ENCODE measurements at regions of chr1 and their contacts with region 1.

Region 1: GRCh38 chr1:53470155-53470554 is 11.0 kb downstream of the DMRTB1 start:
- DNase-seq: peak; percentile 58
- ATAC-seq: peak; percentile 95
- H3K4me3 ChIP-seq: no peak overlapping the region
- H3K27ac ChIP-seq: no peak overlapping the region
- H3K4me1 ChIP-seq: no peaks in the 10 kb centered on the region
- H3K27me3 ChIP-seq: peaks cover 8% of the 10 kb centered on the region
- CTCF ChIP-seq: peak; percentile 68
- POLR2A ChIP-seq: no peak
- RAD21 ChIP-seq: peak; percentile 37

Region 2: DNA sequence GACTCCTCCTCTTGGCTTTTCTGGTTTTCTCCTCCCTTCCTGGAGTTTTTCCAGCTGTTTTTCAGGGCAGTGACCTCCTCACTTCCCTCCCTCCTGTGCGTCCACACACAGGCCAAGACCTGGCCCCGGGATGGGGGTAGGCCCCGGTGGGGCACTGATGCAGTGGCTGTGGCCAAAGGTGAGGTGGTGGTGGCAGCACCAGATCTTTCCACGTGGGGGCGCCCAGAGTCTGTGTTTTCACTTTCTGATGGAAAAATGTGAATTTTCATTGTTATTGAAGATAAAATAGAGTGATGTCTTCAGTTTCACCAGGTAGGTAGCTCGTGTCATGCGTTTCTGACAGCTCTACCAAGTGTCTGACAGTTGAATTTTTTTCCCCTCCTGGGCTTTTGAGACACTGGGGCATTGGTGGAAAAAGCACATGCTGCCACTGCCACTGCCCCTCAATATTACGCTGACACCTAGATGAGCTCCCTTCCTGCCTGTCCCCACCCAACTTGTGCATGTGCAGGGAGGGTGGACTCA is 191.9 kb before region 1 on chr1:
- CTCF ChIA-PET with region 1: no interaction called
- POLR2A ChIA-PET with region 1: no interaction called
- dilution Hi-C with region 1: no loop called
- in situ Hi-C with region 1: loop called (anchors 5 kb)
- intact Hi-C with region 1: loop called (anchors 2 kb)
- DNase-seq: peak; percentile 7
- ATAC-seq: peak; percentile 92
- H3K4me3 ChIP-seq: no peak overlapping the region
- H3K27ac ChIP-seq: no peak overlapping the region
- H3K4me1 ChIP-seq: no peaks in the 10 kb centered on the region
- H3K27me3 ChIP-seq: no peaks in the 10 kb centered on the region
- CTCF ChIP-seq: peak; percentile 94
- POLR2A ChIP-seq: no peak
- RAD21 ChIP-seq: peak; percentile 93

Region 3: DNA sequence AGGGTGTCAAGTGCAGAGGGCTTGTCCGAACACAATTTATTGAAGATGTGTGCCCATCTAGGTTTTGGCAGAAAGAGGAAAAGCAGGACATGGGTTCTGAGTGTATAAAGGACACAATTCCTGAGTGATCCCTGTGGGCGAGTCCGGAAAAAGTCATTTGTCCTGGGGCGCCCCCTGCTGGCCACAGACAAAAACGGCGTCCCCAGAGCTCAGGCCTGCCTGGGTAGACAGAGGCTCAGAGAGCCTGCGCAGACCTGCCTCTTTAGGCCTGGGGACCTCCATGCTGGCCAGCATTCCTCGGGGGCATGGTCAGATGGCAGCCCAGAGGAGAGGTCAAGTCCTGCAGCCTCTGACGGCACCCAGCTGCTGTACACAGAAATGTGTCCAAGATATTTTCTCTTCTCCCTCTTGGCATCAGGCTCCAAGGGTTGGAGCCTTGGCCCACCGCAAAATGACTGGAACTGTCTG is 76.8 kb before region 1 on chr1:
- CTCF ChIA-PET with region 1: no interaction called
- POLR2A ChIA-PET with region 1: no interaction called
- dilution Hi-C with region 1: no loop called
- in situ Hi-C with region 1: no loop called
- intact Hi-C with region 1: loop called (anchors 5 kb)
- DNase-seq: peak; percentile 59
- ATAC-seq: peak; percentile 97
- H3K4me3 ChIP-seq: no peak overlapping the region
- H3K27ac ChIP-seq: no peak overlapping the region
- H3K4me1 ChIP-seq: no peaks in the 10 kb centered on the region
- H3K27me3 ChIP-seq: peaks cover 28% of the 10 kb centered on the region
- CTCF ChIP-seq: peak; percentile 92
- POLR2A ChIP-seq: peak; percentile 33; the same call in 1 of the 2 replicates
- RAD21 ChIP-seq: peak; percentile 93

Region 4: GRCh38 chr1:53562291-53562980 is 92.3 kb after region 1 on chr1:
- CTCF ChIA-PET with region 1: no interaction called
- POLR2A ChIA-PET with region 1: no interaction called
- dilution Hi-C with region 1: no loop called
- in situ Hi-C with region 1: no loop called
- intact Hi-C with region 1: no loop called
- DNase-seq: peak; percentile 30
- ATAC-seq: no peak
- H3K4me3 ChIP-seq: no peak overlapping the region
- H3K27ac ChIP-seq: no peak overlapping the region
- H3K4me1 ChIP-seq: peaks cover 6% of the 10 kb centered on the region; the same call in 1 of the 2 replicates
- H3K27me3 ChIP-seq: no peaks in the 10 kb centered on the region
- CTCF ChIP-seq: no peak
- POLR2A ChIP-seq: no peak
- RAD21 ChIP-seq: no peak

Region 5: DNA sequence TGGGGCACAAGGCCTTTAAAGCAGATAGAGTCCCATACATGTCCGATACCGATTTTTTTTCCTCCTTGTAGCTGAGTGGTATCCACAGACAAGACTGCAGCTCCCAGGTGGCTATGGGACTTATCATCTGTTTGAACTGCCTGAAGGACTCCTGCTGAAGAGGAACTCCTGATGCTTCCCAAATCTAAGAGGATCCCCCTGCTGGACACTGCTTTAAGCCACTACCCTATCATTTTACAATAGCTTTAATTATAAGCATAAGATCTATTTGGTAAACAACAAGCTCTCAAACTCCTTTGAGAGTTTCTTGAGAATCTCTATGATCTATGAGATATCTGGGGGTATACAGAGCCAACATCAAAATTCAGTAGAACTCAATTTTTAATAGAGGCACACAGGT is 356.2 kb after region 1 on chr1:
- CTCF ChIA-PET with region 1: no interaction called
- POLR2A ChIA-PET with region 1: no interaction called
- dilution Hi-C with region 1: no loop called
- in situ Hi-C with region 1: no loop called
- intact Hi-C with region 1: loop called (anchors 5 kb)
- DNase-seq: peak; percentile 43
- ATAC-seq: peak; percentile 53
- H3K4me3 ChIP-seq: no peak overlapping the region
- H3K27ac ChIP-seq: no peak overlapping the region
- H3K4me1 ChIP-seq: peaks cover 2% of the 10 kb centered on the region; the same call in 1 of the 2 replicates
- H3K27me3 ChIP-seq: no peaks in the 10 kb centered on the region
- CTCF ChIP-seq: 0 out of 2 replicates have a peak, but pooled peaks have one; percentile 29
- POLR2A ChIP-seq: no peak
- RAD21 ChIP-seq: 0 out of 2 replicates have a peak, but pooled peaks have one; percentile 17

Measured in IMR-90 (cell line).